Pancreas (tissue), 10 donors: ENCODE measurements at regions of chr19 and their contacts with region 1.

Region 1: GRCh38 chr19:45195764-45196163 is 17.2 kb downstream of the BLOC1S3 start:
- DNase-seq: no peak
- ATAC-seq: no peak
- H3K4me3 ChIP-seq: no peak overlapping the region
- H3K27ac ChIP-seq: no peak overlapping the region
- H3K4me1 ChIP-seq: no peaks in the 10 kb centered on the region
- H3K27me3 ChIP-seq: no peaks in the 10 kb centered on the region
- CTCF ChIP-seq: no peak

Region 2: DNA sequence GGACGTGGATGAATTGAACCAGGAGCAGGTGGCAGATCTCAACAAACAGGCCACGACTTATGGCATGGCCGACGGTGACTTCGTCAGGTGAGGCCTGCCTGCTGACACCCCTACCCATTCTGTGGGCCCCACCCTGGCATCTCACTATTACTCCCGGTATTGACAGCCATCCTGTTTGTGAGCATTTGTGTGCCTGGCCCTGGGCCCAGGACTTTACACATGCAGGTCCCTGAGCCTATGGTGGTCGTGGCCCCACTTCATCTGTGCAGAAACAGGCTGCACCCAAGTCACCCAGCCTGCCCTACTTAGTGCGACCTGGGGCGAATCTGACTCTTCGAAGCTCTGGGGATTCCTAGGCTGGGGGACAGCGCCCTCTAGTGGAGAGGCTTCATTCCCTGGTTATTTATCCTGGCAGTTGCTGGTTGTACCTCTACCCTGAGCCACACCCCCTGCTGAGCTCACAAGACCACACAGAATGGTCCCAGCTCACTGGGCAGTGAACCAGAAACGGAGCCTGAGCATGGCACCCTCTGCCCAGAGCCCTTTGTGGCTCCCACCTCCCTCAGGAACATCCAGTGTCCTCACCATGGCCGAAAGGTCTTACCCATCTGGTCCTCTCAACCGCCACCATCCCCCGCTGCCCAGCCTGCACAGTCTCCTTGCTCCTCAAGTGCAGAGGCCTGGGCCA is 136.3 kb before region 1 on chr19:
- intact Hi-C with region 1: no loop called
- DNase-seq: peak in 5 of 6 donors; percentile 56 to 88 (median 76)
- ATAC-seq: peak; percentile 67 to 90 (median 84)
- H3K4me3 ChIP-seq: no peak overlapping the region
- H3K27ac ChIP-seq: no peak overlapping the region
- H3K4me1 ChIP-seq: no peaks in the 10 kb centered on the region
- H3K27me3 ChIP-seq: no peaks in the 10 kb centered on the region
- CTCF ChIP-seq: peak; percentile 84 to 89 (median 86)

Region 3: DNA sequence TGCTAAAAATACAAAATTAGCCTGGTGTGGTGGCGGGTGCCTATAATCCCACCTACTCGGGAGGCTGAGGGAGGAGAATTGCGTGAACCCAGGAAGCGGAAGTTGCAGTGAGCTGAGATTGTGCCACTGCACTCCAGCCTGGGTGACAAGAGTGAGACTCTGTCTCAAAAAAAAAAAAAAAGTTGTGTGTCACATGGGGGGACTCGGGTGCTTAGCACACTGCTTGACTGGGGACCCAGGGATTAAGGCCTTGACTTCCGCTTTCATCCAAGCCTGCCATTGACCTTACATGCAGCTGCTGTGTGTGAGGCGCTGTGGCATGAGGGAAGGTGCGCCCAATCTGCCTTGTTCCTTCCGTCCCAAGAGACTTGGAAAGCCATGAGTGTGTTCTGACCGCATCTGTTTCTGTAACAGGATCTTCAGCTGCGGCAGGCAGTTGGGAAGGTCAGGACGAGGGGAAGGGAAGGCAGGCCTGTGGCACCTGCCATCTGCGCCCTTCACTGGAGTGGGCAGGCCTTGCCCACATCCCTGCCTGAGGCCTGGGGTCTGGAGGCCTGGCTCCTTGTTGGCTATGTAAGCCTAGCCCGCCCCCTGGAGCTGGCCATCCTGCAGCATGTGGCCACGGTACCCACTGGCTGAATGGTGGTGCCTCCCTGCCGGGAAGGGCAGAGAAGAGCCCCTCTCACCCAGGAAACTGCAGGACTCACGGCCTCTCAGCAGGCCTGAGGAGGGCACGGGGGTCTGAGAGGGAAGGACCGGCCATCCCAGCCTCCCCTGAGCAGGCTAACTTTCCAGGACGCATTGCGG is 79.8 kb before region 1 on chr19:
- intact Hi-C with region 1: no loop called
- DNase-seq: no peak
- ATAC-seq: no peak
- H3K4me3 ChIP-seq: no peak overlapping the region
- H3K27ac ChIP-seq: no peak overlapping the region
- H3K4me1 ChIP-seq: peaks cover 0 to 16% (median 15%) of the 10 kb centered on the region in 3 donors
- H3K27me3 ChIP-seq: no peaks in the 10 kb centered on the region
- CTCF ChIP-seq: no peak

Region 4: GRCh38 chr19:45250832-45251451 is 55.2 kb after region 1 on chr19 and contains the start of gene MARK4:
- intact Hi-C with region 1: loop called in 1 of 3 experiments (anchors 10 kb)
- DNase-seq: peak; percentile 49 to 79 (median 64)
- ATAC-seq: peak; percentile 64 to 83 (median 73)
- H3K4me3 ChIP-seq: peak within 1 kb of the TSS; percentile 47 to 88 (median 72)
- H3K27ac ChIP-seq: peak within 1 kb of the TSS in 3 of 4 donors; percentile 17 to 46 (median 37)
- H3K4me1 ChIP-seq: peaks cover 0 to 5% (median 3%) of the 10 kb centered on the region in 3 donors
- H3K27me3 ChIP-seq: no peaks in the 10 kb centered on the region
- CTCF ChIP-seq: no peak
- total RNA-seq, gene MARK4: 13.9 to 22.8 (median 20.0) TPM

Region 5: DNA sequence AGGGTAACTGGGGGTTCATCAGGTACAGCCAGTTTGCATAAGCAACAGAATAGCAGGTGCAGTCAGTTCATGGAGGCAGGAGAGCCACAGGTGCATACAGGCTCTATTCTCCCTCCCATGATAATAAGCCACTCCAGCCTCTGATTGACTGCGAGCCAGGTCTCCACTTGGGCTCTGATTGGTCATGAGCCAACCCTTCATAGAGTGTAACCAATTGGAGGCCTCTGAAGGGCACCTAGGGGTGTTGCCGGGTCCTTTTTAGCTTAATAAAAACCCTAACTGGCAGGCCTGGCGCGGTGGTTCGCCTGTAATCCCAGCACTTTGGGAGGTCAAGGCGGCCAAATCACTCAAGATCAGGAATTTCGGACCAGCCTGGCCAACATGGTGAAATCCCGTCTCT is 135.7 kb after region 1 on chr19:
- intact Hi-C with region 1: no loop called
- DNase-seq: no peak
- ATAC-seq: no peak
- H3K4me3 ChIP-seq: no peak overlapping the region
- H3K27ac ChIP-seq: no peak overlapping the region
- H3K4me1 ChIP-seq: no peaks in the 10 kb centered on the region
- H3K27me3 ChIP-seq: no peaks in the 10 kb centered on the region
- CTCF ChIP-seq: no peak